Activated CD4-positive, alpha-beta memory T cell treated with anti-CD3 and anti-CD28 coated beads for 36 hours (primary cell): ENCODE measurements at regions of chr10 and their contacts with region 1.

Region 1: GRCh38 chr10:16663444-16663843 is 141.8 kb upstream of the C1QL3 start:
- DNase-seq: no peak
- H3K4me3 Mint-ChIP-seq: no peak overlapping the region
- H3K27ac Mint-ChIP-seq: no peak overlapping the region
- H3K4me1 Mint-ChIP-seq: peaks cover 14% of the 10 kb centered on the region
- H3K27me3 Mint-ChIP-seq: no peaks in the 10 kb centered on the region

Region 2: GRCh38 chr10:16653224-16653623 is 10.2 kb before region 1 on chr10:
- CTCF ChIA-PET with region 1: no interaction called
- POLR2A ChIA-PET with region 1: no interaction called
- intact Hi-C with region 1: loop called (anchors 1 kb)
- DNase-seq: peak; percentile 48
- H3K4me3 Mint-ChIP-seq: no peak overlapping the region
- H3K27ac Mint-ChIP-seq: no peak overlapping the region
- H3K4me1 Mint-ChIP-seq: peaks cover 16% of the 10 kb centered on the region
- H3K27me3 Mint-ChIP-seq: no peaks in the 10 kb centered on the region